Panc1 (cell line): ENCODE measurements at regions of chr6 and their contacts with region 1.

Region 1: DNA sequence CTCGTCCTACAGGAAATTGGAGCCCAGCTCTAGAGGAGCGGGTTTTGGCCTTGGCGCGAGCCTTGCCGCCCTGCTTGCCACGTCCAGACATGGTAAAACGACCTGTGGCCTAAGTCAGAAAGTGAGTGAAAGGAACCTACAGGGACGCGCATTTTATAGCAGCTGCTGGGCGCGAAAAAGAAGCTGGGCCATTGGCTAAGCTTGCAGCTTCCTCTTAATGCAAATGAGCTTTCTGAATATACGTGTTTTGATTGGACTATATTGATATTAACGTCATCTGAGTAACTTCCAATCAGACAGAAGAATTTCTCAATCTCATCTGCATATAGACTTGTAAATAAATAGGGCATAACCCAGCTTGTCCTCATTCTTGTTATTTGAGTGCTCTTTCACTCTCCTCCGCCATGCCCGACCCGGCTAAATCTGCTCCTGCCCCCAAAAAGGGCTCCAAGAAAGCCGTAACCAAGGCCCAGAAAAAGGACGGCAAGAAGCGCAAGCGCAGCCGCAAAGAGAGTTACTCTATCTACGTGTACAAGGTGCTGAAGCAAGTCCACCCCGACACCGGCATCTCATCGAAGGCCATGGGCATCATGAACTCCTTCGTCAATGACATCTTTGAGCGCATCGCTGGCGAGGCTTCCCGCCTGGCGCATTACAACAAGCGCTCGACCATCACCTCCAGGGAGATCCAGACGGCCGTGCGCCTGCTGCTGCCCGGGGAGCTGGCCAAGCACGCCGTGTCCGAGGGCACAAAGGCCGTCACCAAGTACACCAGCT is 18.9 kb downstream of the OR2B2 start:
- DNase-seq: peak; percentile 97
- ATAC-seq: peak; percentile 81
- H3K4me3 ChIP-seq: peak overlapping the region; percentile 87 to 90
- H3K27ac ChIP-seq: peak overlapping the region; percentile 99
- H3K4me1 ChIP-seq: peaks cover 30% of the 10 kb centered on the region
- H3K27me3 ChIP-seq: no peaks in the 10 kb centered on the region
- CTCF ChIP-seq: no peak

Region 2: DNA sequence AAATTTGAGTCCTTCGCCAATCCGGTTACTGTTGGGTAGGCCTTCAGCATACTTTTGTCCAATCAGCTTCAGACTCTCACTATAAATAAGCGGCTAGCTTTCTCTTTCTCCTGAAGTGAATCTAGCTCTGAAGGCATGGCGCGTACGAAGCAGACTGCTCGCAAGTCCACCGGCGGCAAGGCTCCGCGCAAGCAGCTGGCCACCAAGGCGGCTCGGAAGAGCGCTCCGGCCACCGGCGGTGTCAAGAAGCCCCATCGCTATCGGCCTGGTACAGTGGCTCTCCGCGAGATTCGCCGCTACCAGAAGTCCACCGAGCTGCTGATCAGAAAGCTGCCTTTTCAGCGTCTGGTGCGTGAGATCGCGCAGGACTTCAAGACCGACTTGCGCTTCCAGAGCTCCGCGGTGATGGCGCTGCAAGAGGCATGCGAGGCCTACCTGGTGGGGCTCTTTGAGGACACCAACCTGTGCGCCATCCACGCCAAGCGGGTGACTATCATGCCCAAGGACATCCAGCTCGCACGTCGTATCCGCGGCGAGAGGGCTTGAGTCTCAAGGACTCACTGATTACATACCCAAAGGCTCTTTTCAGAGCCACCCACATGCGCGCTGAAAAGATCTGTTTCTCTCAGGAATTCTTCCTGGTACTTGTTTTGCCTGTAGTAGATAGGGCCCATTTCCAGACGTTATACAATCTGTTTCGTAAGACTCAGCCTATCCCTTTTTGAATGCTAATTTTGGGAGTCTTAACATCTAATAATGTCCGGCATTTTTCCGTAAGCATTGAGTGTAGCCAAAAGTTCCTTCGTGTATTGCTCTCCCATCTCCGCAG is 83.1 kb before region 1 on chr6:
- CTCF ChIA-PET with region 1: no interaction called
- POLR2A ChIA-PET with region 1: interaction called, 54 read pairs
- in situ Hi-C with region 1: no loop called
- intact Hi-C with region 1: loop called (anchors 2 kb)
- DNase-seq: peak; percentile 96
- ATAC-seq: peak; percentile 44
- H3K4me3 ChIP-seq: peak overlapping the region; percentile 78 to 93
- H3K27ac ChIP-seq: peak overlapping the region; percentile 100
- H3K4me1 ChIP-seq: peaks cover 17% of the 10 kb centered on the region
- H3K27me3 ChIP-seq: no peaks in the 10 kb centered on the region
- CTCF ChIP-seq: no peak

Region 3: GRCh38 chr6:27871924-27872638 is 21.2 kb before region 1 on chr6:
- CTCF ChIA-PET with region 1: interaction called, 3 read pairs
- POLR2A ChIA-PET with region 1: interaction called, 119 read pairs
- in situ Hi-C with region 1: no loop called
- intact Hi-C with region 1: loop called (anchors 2 kb)
- DNase-seq: peak; percentile 99
- ATAC-seq: peak; percentile 74
- H3K4me3 ChIP-seq: peak overlapping the region; percentile 60 to 66
- H3K27ac ChIP-seq: peak overlapping the region; percentile 98
- H3K4me1 ChIP-seq: peaks cover 33% of the 10 kb centered on the region
- H3K27me3 ChIP-seq: no peaks in the 10 kb centered on the region
- CTCF ChIP-seq: peak; percentile 62

Region 4: GRCh38 chr6:27879837-27880236 is 13.4 kb before region 1 on chr6:
- CTCF ChIA-PET with region 1: no interaction called
- POLR2A ChIA-PET with region 1: interaction called, 119 read pairs
- in situ Hi-C with region 1: no loop called
- intact Hi-C with region 1: no loop called
- DNase-seq: no peak
- ATAC-seq: peak; percentile 62
- H3K4me3 ChIP-seq: no peak overlapping the region
- H3K27ac ChIP-seq: peak overlapping the region; percentile 48; the same call in 1 of the 2 replicates
- H3K4me1 ChIP-seq: no peaks in the 10 kb centered on the region
- H3K27me3 ChIP-seq: no peaks in the 10 kb centered on the region
- CTCF ChIP-seq: no peak

Region 5: DNA sequence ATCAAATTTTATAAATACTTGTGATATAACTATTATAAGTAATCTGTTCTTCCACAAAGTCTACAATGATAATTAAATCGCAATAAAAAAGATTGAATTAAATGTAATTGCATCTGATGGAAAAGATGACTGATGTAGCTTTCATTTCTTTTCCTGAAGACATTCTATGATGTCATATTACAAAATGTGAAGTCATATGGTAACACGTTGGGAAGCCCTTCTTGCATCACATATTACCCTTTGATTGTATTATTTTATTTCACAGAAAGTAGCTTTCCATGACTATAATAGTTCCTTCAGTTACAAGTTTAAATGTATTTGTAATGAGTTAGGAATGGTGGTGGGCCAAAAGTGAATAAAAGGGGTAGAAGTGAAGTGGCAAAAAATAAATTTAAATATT is 38.0 kb after region 1 on chr6:
- CTCF ChIA-PET with region 1: no interaction called
- POLR2A ChIA-PET with region 1: no interaction called
- in situ Hi-C with region 1: no loop called
- intact Hi-C with region 1: no loop called
- DNase-seq: no peak
- ATAC-seq: no peak
- H3K4me3 ChIP-seq: no peak overlapping the region
- H3K27ac ChIP-seq: no peak overlapping the region
- H3K4me1 ChIP-seq: no peaks in the 10 kb centered on the region
- H3K27me3 ChIP-seq: no peaks in the 10 kb centered on the region
- CTCF ChIP-seq: no peak

Region 6: GRCh38 chr6:27980111-27980510 is 86.9 kb after region 1 on chr6:
- CTCF ChIA-PET with region 1: no interaction called
- POLR2A ChIA-PET with region 1: no interaction called
- in situ Hi-C with region 1: no loop called
- intact Hi-C with region 1: no loop called
- DNase-seq: no peak
- ATAC-seq: no peak
- H3K4me3 ChIP-seq: no peak overlapping the region
- H3K27ac ChIP-seq: no peak overlapping the region
- H3K4me1 ChIP-seq: no peaks in the 10 kb centered on the region
- H3K27me3 ChIP-seq: 0 out of 2 replicates have a peak, but pooled peaks cover 6% of the 10 kb centered on the region
- CTCF ChIP-seq: no peak